ENCODE measurements at regions of chr10 and their contacts with region 1.

Region 1: DNA sequence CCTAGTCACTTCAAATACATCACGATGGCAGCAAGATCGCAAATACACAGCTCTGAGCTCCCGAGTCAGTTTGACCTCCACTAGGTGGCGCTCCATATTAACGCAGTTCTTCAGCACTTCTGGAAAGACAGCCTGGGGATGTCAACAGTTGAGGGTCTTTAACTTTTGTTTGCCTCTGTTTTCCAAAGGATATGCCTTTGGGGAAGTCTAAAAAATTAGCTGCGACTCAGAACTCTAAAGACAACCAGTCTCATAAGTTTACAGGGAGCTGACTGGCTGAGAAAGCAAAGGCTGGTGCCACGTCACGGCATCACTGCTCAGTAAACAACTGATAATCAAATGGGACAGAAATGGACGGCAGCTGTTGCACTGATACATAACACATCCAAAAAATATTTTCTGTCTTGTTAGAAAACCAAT is 458.8 kb downstream of the SORCS1 start:
- DNase-seq: no peak
- H3K4me3 ChIP-seq: no peak overlapping the region
- H3K27ac ChIP-seq: no peak overlapping the region
- H3K4me1 ChIP-seq: no peaks in the 10 kb centered on the region
- H3K27me3 ChIP-seq: no peaks in the 10 kb centered on the region
- CTCF ChIP-seq: peak; percentile 9 to 38
- POLR2A ChIP-seq: no peak

Region 2: GRCh38 chr10:107814865-107815487 is 1109.3 kb after region 1 on chr10:
- CTCF ChIA-PET with region 1: no interaction called
- POLR2A ChIA-PET with region 1: no interaction called
- dilution Hi-C with region 1: no loop called
- intact Hi-C with region 1: loop called (anchors 5 kb)
- DNase-seq: no peak
- H3K4me3 ChIP-seq: no peak overlapping the region
- H3K27ac ChIP-seq: no peak overlapping the region
- H3K4me1 ChIP-seq: no peaks in the 10 kb centered on the region
- H3K27me3 ChIP-seq: no peaks in the 10 kb centered on the region
- CTCF ChIP-seq: no peak
- POLR2A ChIP-seq: no peak